Ascending aorta (tissue), 2 donors: ENCODE measurements at regions of chr9 and their contacts with region 1.

Region 1: GRCh38 chr9:35489313-35490154 is at the start of gene RUSC2:
- DNase-seq: peak; percentile 67 to 91
- H3K4me3 ChIP-seq: peak within 1 kb of the TSS; percentile 72 to 80
- H3K27ac ChIP-seq: peak within 1 kb of the TSS; percentile 98 to 99
- H3K4me1 ChIP-seq: no peaks in the 10 kb centered on the region
- H3K27me3 ChIP-seq: no peaks in the 10 kb centered on the region
- CTCF ChIP-seq: peak; percentile 39 to 60 (median 49)
- total RNA-seq, gene RUSC2: 116 TPM

Region 2: GRCh38 chr9:35510745-35511428 is 21.4 kb after region 1 on chr9:
- intact Hi-C with region 1: loop called (anchors 1 kb)
- DNase-seq: peak; percentile 53 to 94
- H3K4me3 ChIP-seq: peak overlapping the region in 1 of 2 donors; percentile 22
- H3K27ac ChIP-seq: peak overlapping the region; percentile 94 to 95
- H3K4me1 ChIP-seq: peaks cover 13 to 65% of the 10 kb centered on the region in 2 donors
- H3K27me3 ChIP-seq: no peaks in the 10 kb centered on the region
- CTCF ChIP-seq: peak; percentile 39 to 52 (median 42)

Region 3: DNA sequence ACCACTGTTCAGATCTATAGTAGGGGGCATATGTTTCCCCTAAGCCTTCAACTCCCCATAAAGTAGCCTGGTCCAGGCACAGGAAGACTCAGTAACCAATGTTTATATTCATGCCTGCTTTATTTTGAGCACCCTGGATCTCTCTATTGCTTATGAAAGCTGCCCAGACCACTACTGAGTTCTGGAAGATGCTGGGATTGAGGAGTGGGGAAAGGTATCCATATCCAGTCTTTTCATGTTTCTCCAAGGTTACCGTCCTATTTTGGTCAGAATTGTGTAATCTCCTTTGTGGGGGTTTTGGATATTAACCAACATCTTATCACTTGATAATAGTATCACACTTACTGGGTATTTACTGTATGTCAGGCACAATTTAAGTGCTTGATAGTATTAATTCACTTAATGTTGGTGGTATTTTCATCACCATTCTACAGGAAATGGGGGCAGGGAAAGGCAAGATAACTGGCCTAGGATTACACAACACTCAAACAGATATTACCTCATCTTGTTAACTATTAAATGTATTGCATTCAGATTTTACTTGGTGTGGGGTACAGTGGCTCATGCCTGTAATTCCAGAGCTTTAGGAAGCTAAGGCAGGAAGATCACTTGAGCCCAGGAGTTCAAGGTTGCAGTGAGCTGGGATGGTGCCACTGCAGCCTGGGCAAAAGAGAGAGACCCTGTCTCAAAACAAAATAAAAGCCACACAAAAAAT is 36.7 kb after region 1 on chr9:
- intact Hi-C with region 1: no loop called
- DNase-seq: peak in 1 of 2 donors; percentile 31
- H3K4me3 ChIP-seq: no peak overlapping the region
- H3K27ac ChIP-seq: peak overlapping the region; percentile 72 to 94
- H3K4me1 ChIP-seq: peaks cover 10 to 64% of the 10 kb centered on the region in 2 donors
- H3K27me3 ChIP-seq: no peaks in the 10 kb centered on the region
- CTCF ChIP-seq: no peak

Region 4: GRCh38 chr9:35553670-35554543 is 64.4 kb after region 1 on chr9:
- intact Hi-C with region 1: loop called (anchors 2 kb)
- DNase-seq: peak; percentile 41 to 88
- H3K4me3 ChIP-seq: peak overlapping the region in 1 of 2 donors; percentile 7
- H3K27ac ChIP-seq: peak overlapping the region; percentile 68 to 76
- H3K4me1 ChIP-seq: peaks cover 0 to 36% of the 10 kb centered on the region in 2 donors
- H3K27me3 ChIP-seq: no peaks in the 10 kb centered on the region
- CTCF ChIP-seq: peak; percentile 85 to 91 (median 87)

Region 5: DNA sequence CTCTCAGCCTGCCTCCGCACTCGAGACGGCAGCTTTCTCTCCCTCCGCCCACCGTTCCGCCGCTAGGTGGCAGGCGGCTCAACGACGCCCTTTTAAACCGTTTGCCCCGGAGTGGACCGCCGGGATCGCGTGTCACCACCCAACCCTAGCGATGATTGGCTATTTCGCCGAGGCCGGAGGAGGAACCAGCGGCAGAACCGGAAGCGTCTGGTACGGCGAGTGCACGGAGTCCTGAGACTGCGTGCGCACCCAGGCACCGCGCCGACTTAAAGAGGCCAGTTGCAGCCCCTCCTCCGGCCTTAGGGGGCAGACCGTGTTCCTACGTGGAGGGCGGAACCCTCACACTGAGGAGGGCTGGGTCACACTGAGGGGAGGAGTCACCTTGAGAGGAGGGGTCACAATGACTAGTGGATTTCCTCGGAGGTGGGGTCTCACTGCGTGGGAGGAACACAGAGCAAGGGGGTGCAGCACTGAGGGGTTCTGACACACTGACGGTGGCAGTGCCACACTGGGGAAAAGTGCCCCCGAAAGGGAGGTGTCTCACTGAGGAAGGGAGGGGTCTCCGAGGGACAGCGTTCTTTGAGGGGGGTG is 114.5 kb after region 1 on chr9:
- intact Hi-C with region 1: loop called (anchors 2 kb)
- DNase-seq: peak; percentile 98 to 100
- H3K4me3 ChIP-seq: peak overlapping the region; percentile 92 to 97
- H3K27ac ChIP-seq: peak overlapping the region; percentile 93 to 95
- H3K4me1 ChIP-seq: peaks cover 15 to 26% of the 10 kb centered on the region in 2 donors
- H3K27me3 ChIP-seq: no peaks in the 10 kb centered on the region
- CTCF ChIP-seq: peak; percentile 89 to 96 (median 93)

Region 6: DNA sequence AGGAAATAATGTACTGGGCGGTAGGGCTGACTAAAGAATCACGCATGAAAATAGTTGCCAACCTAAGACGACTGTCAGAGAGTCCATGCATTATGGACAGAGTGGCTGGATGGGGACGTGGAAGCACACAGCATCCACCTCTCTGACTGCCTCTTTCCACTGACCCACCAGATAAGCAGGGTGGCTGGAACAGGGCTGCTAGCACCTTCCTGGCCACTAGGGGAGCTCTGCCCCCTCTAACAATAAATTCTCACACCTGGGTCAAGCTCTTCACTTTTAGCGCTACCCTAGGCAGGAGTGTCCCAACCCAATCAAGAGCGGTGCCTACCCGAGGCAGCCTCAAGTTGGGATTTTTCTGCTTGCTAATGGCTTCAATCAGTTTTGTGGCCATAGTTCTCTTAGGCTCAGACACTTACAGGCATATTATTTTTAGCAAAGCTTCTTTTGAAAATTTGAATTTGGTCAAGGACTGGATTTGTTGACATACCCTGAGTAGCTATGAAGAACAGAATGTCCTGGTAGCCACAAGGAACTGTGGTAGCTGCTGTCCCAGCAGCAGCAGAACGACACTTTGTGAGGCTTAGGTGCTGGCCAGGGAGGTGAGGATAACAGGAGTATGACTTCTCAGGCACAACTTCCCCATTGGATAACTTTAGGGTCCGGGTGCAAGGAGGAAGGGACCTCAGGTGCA is 207.1 kb after region 1 on chr9:
- intact Hi-C with region 1: loop called (anchors 10 kb)
- DNase-seq: peak in 1 of 2 donors; percentile 82
- H3K4me3 ChIP-seq: no peak overlapping the region
- H3K27ac ChIP-seq: peak overlapping the region; percentile 93 to 97
- H3K4me1 ChIP-seq: peaks cover 3 to 48% of the 10 kb centered on the region in 2 donors
- H3K27me3 ChIP-seq: no peaks in the 10 kb centered on the region
- CTCF ChIP-seq: peak; percentile 79 to 87 (median 87)

Region 7: DNA sequence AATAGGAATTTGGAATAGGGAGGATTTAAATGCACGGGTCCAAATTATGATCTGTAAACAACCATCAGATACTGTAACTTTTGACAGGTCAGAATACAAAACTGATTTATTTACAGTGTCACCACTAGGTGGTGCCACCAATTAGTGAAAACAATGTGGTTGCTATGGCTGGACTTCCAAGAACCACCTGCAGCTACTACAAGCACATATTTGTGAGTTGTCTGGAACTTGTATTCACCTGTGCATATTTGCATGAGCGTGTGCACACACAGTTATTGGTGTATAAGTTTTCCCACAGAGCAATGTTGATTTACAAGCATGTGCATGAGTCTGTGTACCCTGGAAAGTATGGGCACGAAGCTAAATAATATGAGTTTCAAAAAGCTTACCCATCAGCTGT is 413.5 kb after region 1 on chr9:
- intact Hi-C with region 1: loop called (anchors 10 kb)
- DNase-seq: no peak
- H3K4me3 ChIP-seq: no peak overlapping the region
- H3K27ac ChIP-seq: no peak overlapping the region
- H3K4me1 ChIP-seq: peaks cover 27 to 41% of the 10 kb centered on the region in 2 donors
- H3K27me3 ChIP-seq: no peaks in the 10 kb centered on the region
- CTCF ChIP-seq: peak; percentile 59 to 70 (median 69)